ENCODE measurements at regions of chr2 and their contacts with region 1.

Region 1: GRCh38 chr2:15636972-15637785 is 45.5 kb downstream of the DDX1 start:
- DNase-seq: peak; percentile 48 to 93 (median 78)
- H3K4me3 ChIP-seq: no peak overlapping the region
- H3K27ac ChIP-seq: no peak overlapping the region
- H3K4me1 ChIP-seq: peaks cover 3 to 10% of the 10 kb centered on the region in 2 donors
- H3K27me3 ChIP-seq: no peaks in the 10 kb centered on the region
- CTCF ChIP-seq: peak; percentile 71 to 98 (median 92)
- POLR2A ChIP-seq: no peak

Region 2: GRCh38 chr2:15539999-15540398 is 97.2 kb before region 1 on chr2:
- intact Hi-C with region 1: no loop called
- DNase-seq: no peak
- H3K4me3 ChIP-seq: no peak overlapping the region
- H3K27ac ChIP-seq: no peak overlapping the region
- H3K4me1 ChIP-seq: no peaks in the 10 kb centered on the region
- H3K27me3 ChIP-seq: no peaks in the 10 kb centered on the region
- CTCF ChIP-seq: no peak
- POLR2A ChIP-seq: no peak

Region 3: DNA sequence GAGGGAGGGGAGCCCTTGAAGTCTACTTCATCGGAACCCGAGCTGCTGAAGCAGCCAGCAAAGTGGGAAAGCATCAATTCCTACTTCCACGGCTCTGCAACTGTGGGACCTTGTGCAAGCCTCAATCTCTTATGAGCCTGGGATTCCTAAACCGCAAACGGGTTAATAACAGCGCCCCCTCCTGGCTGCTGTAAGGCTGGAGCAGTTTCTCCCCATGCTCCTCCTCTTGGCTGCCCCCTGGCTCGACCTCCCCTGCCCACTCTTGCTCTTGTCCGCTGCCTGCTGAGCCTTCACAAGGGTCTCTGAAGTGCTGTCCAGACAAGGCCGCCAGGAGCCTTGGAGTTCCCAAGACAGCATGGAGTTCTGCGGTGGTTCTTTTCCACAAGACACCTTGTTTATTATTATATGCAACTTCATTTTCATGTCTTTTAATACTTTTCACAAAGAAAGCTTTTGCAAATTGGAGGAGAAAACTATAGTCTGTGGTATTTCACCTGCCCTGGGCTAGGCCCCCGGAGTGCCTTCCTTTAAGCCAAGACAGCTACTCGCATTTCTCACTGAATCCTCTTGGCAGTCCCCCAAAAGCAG is 111.7 kb after region 1 on chr2:
- intact Hi-C with region 1: loop called (anchors 5 to 10 kb)
- DNase-seq: peak in 6 of 7 donors; percentile 25 to 72 (median 62)
- H3K4me3 ChIP-seq: no peak overlapping the region
- H3K27ac ChIP-seq: no peak overlapping the region
- H3K4me1 ChIP-seq: peaks cover 0 to 16% of the 10 kb centered on the region in 2 donors
- H3K27me3 ChIP-seq: no peaks in the 10 kb centered on the region
- CTCF ChIP-seq: peak; percentile 25 to 58 (median 44)
- POLR2A ChIP-seq: no peak

Region 4: GRCh38 chr2:15939854-15940660 is 302.9 kb after region 1 on chr2 and contains the start of gene MYCN:
- intact Hi-C with region 1: loop called in 1 of 2 experiments (anchors 10 kb)
- DNase-seq: peak in 6 of 7 donors; percentile 15 to 76 (median 50)
- H3K4me3 ChIP-seq: peak within 1 kb of the TSS in 2 of 4 donors; percentile 24 to 48
- H3K27ac ChIP-seq: no peak within 1 kb of the TSS
- H3K4me1 ChIP-seq: peaks cover 19 to 30% of the 10 kb centered on the region in 2 donors
- H3K27me3 ChIP-seq: peaks cover 35% of the 10 kb centered on the region
- CTCF ChIP-seq: peak in 4 of 6 experiments; percentile 65 to 85 (median 78)
- POLR2A ChIP-seq: no peak
- total RNA-seq, gene MYCN: 0.24 to 2.2 (median 1.4) TPM

Region 5: DNA sequence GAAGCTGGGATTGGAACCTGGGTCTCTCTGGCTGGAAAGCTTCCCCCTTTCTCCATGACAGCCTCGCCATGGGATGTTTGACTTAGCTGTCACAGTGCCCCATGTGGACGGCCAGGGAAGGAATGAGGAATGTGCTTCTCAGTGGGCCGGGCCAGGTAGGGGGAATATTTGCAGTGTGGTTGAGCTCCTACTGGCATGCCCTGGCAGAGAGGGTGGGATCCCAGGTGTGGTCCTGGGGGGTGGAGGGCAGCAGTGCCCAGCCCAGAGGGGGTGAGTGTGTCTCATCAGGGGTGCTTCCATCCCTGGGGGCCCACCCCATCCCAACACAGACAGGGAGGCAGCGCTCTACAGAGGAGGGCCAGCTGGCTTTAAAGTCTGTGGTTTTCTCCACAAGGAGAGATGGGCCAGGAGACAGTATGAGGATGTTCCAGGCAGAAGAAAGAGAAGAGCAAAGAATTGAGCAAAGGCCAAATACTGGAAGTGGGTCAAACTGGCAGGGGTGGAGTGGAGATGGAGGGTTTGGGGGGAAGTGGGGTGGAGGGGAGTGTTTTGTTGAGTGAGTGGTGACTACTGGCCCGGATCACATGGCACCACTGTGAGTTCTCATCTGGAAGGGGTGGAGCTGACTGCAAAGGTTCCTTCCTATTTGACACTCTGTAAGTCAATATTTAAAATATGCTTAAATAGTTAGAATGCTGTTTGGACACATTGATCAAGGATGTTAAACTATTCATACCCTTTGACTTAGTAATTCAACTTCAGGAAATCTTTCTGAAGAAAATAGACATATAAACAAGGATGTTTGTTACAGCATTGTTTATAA is 397.2 kb after region 1 on chr2:
- intact Hi-C with region 1: no loop called
- DNase-seq: no peak
- H3K4me3 ChIP-seq: no peak overlapping the region
- H3K27ac ChIP-seq: no peak overlapping the region
- H3K4me1 ChIP-seq: no peaks in the 10 kb centered on the region
- H3K27me3 ChIP-seq: no peaks in the 10 kb centered on the region
- CTCF ChIP-seq: no peak
- POLR2A ChIP-seq: no peak

Region 6: GRCh38 chr2:16281451-16282336 is 644.5 kb after region 1 on chr2:
- intact Hi-C with region 1: loop called in 1 of 2 experiments (anchors 5 kb)
- DNase-seq: peak in 6 of 7 donors; percentile 31 to 68 (median 36)
- H3K4me3 ChIP-seq: no peak overlapping the region
- H3K27ac ChIP-seq: no peak overlapping the region
- H3K4me1 ChIP-seq: no peaks in the 10 kb centered on the region
- H3K27me3 ChIP-seq: no peaks in the 10 kb centered on the region
- CTCF ChIP-seq: peak; percentile 34 to 62 (median 50)
- POLR2A ChIP-seq: no peak

Region 7: GRCh38 chr2:16507655-16508489 is 870.7 kb after region 1 on chr2:
- intact Hi-C with region 1: loop called in 1 of 2 experiments (anchors 10 kb)
- DNase-seq: peak in 6 of 7 donors; percentile 45 to 56 (median 53)
- H3K4me3 ChIP-seq: peak overlapping the region in 2 of 4 donors; percentile 30 to 54
- H3K27ac ChIP-seq: no peak overlapping the region
- H3K4me1 ChIP-seq: peaks cover 7 to 9% of the 10 kb centered on the region in 2 donors
- H3K27me3 ChIP-seq: peaks cover 26% of the 10 kb centered on the region
- CTCF ChIP-seq: peak; percentile 21 to 73 (median 52)
- POLR2A ChIP-seq: no peak

Measured in adrenal gland (tissue), 19 donors.